Activated CD8-positive, alpha-beta T cell treated with anti-CD3 and anti-CD28 coated beads for 36 hours (primary cell): ENCODE measurements at regions of chr9 and their contacts with region 1.

Region 1: DNA sequence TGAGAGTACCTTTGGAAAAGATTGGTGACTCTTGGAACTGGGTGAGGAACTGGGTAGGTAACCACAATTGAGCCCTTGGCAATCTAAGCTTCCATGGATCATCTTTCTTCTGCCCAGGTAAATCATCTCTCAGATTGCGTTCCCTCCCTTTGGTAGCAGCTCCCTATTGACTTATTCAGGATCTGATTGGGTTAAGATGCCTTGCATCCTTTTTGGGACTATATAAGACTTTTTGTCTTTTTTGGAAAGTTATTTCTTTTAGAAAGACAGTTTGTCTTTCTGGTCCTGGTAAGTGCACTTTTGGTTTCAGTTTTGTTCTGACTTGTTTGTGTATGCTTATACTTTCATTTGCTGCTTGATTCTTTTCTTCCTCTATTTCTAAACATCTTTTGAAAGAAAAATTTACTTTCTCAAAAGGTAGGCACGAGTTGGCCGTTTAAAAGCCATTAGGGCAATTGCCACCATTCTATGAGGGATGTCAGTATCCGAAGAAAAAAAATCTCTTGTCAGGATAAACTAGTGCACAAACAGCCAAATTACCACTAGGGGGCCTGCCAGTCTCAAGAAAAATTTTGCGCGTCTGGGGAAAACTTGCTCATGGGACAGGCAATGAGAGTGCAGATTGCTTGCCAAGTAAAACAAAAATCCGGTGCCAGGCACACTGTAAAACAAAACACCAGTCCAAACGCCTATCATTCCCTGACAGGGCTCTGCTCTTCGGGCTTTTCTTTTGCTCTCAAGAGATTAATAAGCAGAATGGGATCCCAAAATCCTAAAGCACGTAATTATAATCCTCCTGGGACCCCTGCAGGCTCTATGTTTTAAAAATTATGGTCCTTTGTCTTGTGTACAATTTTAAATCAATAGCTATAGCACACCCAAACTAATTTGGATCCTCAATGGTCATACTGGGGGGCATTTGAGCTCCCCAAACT is 12.8 kb downstream of the OR1J1 start:
- DNase-seq: peak; percentile 79
- ATAC-seq: peak; percentile 79
- H3K4me3 Mint-ChIP-seq: peak overlapping the region; percentile 77
- H3K27ac Mint-ChIP-seq: peak overlapping the region; percentile 82
- H3K4me1 Mint-ChIP-seq: peaks cover 14% of the 10 kb centered on the region
- H3K27me3 Mint-ChIP-seq: peaks cover 27% of the 10 kb centered on the region
- CTCF ChIP-seq: peak; percentile 88

Region 2: DNA sequence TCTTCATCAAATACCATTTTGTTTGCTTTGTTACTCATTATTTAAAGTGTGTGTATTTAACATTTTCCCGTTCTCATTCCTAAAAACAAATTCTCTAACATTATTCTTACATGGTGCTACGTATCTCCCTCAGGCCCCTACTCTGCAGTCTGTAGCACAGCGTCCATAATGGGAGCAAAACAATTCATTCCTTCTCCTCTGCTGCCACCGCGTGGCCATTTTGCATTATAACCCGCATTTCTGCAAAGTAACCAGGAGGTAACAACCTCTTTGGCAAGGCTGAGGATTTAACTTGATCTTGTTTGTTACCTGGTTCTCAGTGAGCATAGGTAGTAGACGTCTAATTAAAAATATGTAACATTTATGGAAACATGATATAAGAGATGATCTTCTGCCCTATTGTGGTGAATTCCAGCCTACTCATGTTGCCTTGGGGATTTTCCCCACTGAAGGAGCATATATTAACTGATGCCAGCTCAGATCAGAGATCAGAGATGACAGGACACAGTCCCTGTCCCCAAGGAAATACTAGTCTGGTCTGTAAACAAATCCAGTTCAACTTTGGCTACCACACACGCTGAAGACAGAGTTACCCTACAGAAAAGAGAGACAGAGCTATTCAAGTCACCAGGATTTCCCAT is 345.5 kb after region 1 on chr9:
- CTCF ChIA-PET with region 1: interaction called, 73 read pairs
- POLR2A ChIA-PET with region 1: no interaction called
- intact Hi-C with region 1: loop called (anchors 2 kb)
- DNase-seq: peak; percentile 83
- ATAC-seq: peak; percentile 77
- H3K4me3 Mint-ChIP-seq: no peak overlapping the region
- H3K27ac Mint-ChIP-seq: no peak overlapping the region
- H3K4me1 Mint-ChIP-seq: peaks cover 31% of the 10 kb centered on the region
- H3K27me3 Mint-ChIP-seq: no peaks in the 10 kb centered on the region
- CTCF ChIP-seq: peak; percentile 89